Activated CD8-positive, alpha-beta T cell treated with anti-CD3 and anti-CD28 coated beads for 36 hours (primary cell): ENCODE measurements at regions of chr10 and their contacts with region 1.

Region 1: GRCh38 chr10:114304017-114304570 is 65.0 kb downstream of the VWA2 start:
- DNase-seq: peak; percentile 92
- ATAC-seq: peak; percentile 72
- H3K4me3 Mint-ChIP-seq: peak overlapping the region; percentile 86
- H3K27ac Mint-ChIP-seq: peak overlapping the region; percentile 89
- H3K4me1 Mint-ChIP-seq: peaks cover 13% of the 10 kb centered on the region
- H3K27me3 Mint-ChIP-seq: no peaks in the 10 kb centered on the region
- CTCF ChIP-seq: peak; percentile 62

Region 2: GRCh38 chr10:114322344-114322743 is 18.2 kb after region 1 on chr10:
- CTCF ChIA-PET with region 1: interaction called, 20 read pairs
- POLR2A ChIA-PET with region 1: no interaction called
- intact Hi-C with region 1: no loop called
- DNase-seq: no peak
- ATAC-seq: no peak
- H3K4me3 Mint-ChIP-seq: no peak overlapping the region
- H3K27ac Mint-ChIP-seq: no peak overlapping the region
- H3K4me1 Mint-ChIP-seq: no peaks in the 10 kb centered on the region
- H3K27me3 Mint-ChIP-seq: no peaks in the 10 kb centered on the region
- CTCF ChIP-seq: no peak

Region 3: DNA sequence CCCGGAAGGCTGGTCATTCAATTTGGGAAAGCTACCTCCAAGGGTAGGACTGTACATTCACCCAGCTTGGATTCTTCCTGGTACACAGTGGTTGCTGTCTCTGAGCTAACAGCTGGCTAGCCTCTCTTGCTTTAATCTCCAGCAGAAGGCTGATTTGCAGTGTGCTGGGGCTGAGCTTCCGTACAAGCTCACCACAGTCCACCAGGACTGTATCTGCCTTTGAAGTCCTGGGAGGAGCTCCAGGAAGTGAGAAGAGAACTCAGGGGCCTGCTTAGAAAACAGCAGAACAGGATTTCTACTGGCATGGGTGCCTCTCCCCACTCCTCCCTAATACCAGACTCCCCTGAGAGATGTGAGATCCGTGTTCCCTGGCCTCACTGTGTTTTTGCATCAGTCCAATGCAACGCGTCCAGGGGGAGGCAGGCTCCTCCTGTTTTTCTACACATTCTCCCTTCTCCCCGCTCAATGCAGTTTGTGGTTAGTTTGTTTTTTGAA is 93.6 kb after region 1 on chr10:
- CTCF ChIA-PET with region 1: interaction called, 22 read pairs
- POLR2A ChIA-PET with region 1: no interaction called
- intact Hi-C with region 1: no loop called
- DNase-seq: no peak
- ATAC-seq: peak; percentile 34
- H3K4me3 Mint-ChIP-seq: no peak overlapping the region
- H3K27ac Mint-ChIP-seq: no peak overlapping the region
- H3K4me1 Mint-ChIP-seq: peaks cover 18% of the 10 kb centered on the region
- H3K27me3 Mint-ChIP-seq: peaks cover 56% of the 10 kb centered on the region
- CTCF ChIP-seq: no peak

Region 4: DNA sequence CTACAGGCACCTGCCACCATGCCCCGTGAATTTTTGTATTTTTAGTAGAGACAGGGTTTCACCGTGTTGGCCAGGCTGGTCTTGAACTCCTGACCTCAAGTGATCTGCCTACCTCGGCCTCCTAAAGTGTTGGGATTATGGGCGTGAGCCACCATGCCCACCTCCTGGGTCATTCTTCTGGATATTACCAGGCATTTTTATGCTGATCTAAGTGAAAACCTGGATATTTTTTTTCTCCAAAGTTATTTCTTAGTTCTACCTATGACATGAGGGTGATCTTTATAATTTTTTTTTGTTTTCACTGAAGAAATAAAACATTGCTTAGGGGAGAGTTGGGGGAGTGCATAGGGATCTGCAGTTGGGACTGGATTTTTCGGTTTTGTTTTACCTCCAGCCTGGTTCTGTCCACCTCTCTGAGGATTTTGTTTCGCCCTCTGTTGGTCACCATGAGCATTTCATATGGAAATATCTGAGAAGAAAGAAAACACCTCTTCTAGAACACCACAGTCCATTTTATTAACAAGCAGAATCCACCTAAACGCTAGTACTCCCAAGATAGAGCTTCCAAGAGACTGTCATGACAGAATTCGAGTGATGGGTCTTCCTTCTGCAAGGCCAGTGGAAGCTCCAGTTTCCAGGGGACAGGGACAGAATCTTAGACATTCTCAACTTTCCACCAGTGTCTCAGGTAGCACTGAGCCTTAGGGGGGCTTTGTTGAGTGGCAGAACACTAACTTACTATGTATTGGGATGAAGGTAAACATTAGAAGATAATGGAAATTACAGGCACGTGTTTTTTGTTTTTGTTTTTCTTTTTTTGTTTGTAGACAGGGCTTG is 133.6 kb after region 1 on chr10:
- CTCF ChIA-PET with region 1: interaction called, 33 read pairs
- POLR2A ChIA-PET with region 1: no interaction called
- intact Hi-C with region 1: no loop called
- DNase-seq: no peak
- ATAC-seq: peak; percentile 51
- H3K4me3 Mint-ChIP-seq: no peak overlapping the region
- H3K27ac Mint-ChIP-seq: peak overlapping the region; percentile 35
- H3K4me1 Mint-ChIP-seq: peaks cover 3% of the 10 kb centered on the region
- H3K27me3 Mint-ChIP-seq: no peaks in the 10 kb centered on the region
- CTCF ChIP-seq: peak; percentile 51

Region 5: GRCh38 chr10:114486938-114487814 is 183.1 kb after region 1 on chr10:
- CTCF ChIA-PET with region 1: interaction called, 12 read pairs
- POLR2A ChIA-PET with region 1: no interaction called
- intact Hi-C with region 1: no loop called
- DNase-seq: peak; percentile 50
- ATAC-seq: peak; percentile 72
- H3K4me3 Mint-ChIP-seq: no peak overlapping the region
- H3K27ac Mint-ChIP-seq: peak overlapping the region; percentile 76
- H3K4me1 Mint-ChIP-seq: peaks cover 56% of the 10 kb centered on the region
- H3K27me3 Mint-ChIP-seq: no peaks in the 10 kb centered on the region
- CTCF ChIP-seq: peak; percentile 42

Region 6: DNA sequence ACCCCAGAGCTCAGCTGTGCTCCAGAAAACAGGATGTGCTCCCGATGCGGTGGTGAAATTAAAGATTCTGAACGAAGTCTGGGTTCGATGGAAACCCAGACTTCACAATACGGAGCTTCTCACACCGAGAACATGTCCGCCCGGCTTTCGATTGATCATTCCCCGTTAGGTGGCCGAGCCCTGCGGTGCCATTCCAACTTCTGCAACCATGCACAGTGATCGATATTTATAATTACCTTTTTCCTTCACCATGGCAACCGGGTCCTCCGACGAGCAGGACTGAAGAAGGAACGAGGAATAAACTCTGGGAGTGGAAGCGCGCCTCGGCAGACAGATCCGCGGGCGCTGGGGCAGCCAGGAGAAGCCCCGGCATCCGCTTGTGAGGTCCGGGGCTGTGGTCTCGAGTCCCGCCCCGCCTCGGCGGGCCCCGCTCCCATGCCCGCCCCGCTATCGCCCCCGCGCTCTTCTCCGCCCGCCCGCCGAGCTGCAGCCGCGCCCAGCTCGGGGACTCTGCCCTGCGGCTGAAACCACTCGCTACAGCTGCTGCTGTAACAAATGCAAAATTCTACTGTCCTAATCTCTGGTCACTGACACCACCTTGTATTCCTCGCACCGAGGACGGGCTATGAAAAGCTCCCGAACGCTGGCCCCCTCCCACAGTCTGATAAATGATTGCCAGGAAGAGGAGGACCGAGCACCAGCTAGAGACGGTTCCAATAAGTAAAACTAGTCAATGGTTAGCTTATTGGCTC is 327.7 kb after region 1 on chr10:
- CTCF ChIA-PET with region 1: no interaction called
- POLR2A ChIA-PET with region 1: no interaction called
- intact Hi-C with region 1: no loop called
- DNase-seq: peak; percentile 47
- ATAC-seq: peak; percentile 85
- H3K4me3 Mint-ChIP-seq: peak overlapping the region; percentile 74
- H3K27ac Mint-ChIP-seq: no peak overlapping the region
- H3K4me1 Mint-ChIP-seq: peaks cover 19% of the 10 kb centered on the region
- H3K27me3 Mint-ChIP-seq: peaks cover 37% of the 10 kb centered on the region
- CTCF ChIP-seq: no peak

Region 7: GRCh38 chr10:114703377-114704107 is 399.4 kb after region 1 on chr10:
- CTCF ChIA-PET with region 1: interaction called, 22 read pairs
- POLR2A ChIA-PET with region 1: no interaction called
- intact Hi-C with region 1: no loop called
- DNase-seq: peak; percentile 13
- ATAC-seq: peak; percentile 58
- H3K4me3 Mint-ChIP-seq: no peak overlapping the region
- H3K27ac Mint-ChIP-seq: no peak overlapping the region
- H3K4me1 Mint-ChIP-seq: no peaks in the 10 kb centered on the region
- H3K27me3 Mint-ChIP-seq: peaks cover 2% of the 10 kb centered on the region
- CTCF ChIP-seq: peak; percentile 65